Naive thymus-derived CD4-positive, alpha-beta T cell (primary cell): ENCODE measurements at regions of chr3 and their contacts with region 1.

Region 1: DNA sequence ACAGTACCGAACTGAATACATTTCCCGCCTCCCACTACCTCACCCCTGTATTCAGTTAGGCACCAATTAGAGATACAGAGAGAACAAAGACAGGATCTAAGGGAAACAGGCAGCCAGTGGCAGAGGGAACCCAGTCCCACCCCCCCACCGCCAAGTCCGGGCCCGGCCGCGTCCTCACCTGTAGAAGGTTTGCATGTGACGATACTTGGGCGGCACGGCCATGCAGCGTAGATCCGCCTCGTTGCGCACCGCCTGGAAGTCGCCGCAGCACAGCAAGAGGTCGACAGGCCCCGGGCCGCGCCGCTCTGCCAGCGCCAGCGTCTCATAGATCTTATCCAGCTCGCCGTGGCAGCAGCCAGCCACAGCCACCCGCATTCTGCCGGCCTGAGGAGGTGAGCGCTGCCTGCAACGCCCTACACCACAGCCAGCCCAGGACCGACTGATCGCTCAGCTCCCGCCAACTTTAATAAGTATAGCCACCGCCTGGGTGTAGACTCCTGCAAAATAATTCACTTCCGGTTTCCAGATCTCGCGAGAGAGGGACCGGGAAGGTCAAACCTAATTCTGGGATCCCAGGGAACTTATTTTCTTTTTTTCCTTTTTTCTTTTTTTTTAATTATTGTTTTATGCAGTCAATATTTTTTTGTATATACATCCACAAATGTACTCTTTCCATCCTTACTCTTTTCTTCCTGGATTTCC is at the start of gene DBR1:
- DNase-seq: peak; percentile 51 to 81 (median 74)
- ATAC-seq: peak; percentile 91
- H3K4me3 ChIP-seq: peak within 1 kb of the TSS; percentile 79
- H3K4me3 Mint-ChIP-seq: peak within 1 kb of the TSS; percentile 87 to 99 (median 98)
- H3K27ac ChIP-seq: peak within 1 kb of the TSS; percentile 80
- H3K27ac Mint-ChIP-seq: peak within 1 kb of the TSS; percentile 96 to 99 (median 97)
- H3K4me1 ChIP-seq: peaks cover 20 to 22% of the 10 kb centered on the region in 2 donors
- H3K4me1 Mint-ChIP-seq: peaks cover 22 to 56% (median 45%) of the 10 kb centered on the region in 7 donors
- H3K27me3 ChIP-seq: no peaks in the 10 kb centered on the region
- H3K27me3 Mint-ChIP-seq: peaks cover 0 to 9% (median 0%) of the 10 kb centered on the region in 5 donors
- total RNA-seq, gene DBR1: 15.4 to 28.2 (median 20.8) TPM

Region 2: DNA sequence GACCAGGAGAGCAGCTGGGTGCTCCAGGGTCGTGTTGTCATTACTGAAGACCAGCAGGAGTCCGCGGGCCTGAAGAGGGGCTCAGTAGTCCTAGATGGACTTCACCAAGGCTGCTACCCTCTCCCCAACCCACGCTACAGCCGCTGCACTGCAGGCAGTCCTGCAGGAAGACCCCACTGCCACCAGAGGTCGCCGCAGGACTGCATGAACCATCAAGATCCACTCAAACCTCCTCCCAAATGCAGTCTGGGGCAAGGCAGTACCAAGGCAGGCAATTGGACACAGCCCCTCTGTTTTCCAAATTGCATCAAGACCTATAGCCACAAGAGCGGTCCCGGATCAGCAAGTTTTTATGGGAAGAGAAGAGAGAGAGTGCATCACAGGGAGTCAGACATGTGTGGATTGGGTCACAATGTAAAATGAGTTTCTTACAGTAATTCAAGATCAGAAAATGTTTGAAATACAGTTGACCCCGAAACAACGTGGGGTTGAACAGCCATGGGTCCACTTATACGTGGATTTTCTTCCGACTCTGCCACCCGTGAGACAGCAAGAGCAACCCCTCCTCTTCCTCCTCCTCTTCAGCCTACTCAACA is 105.9 kb before region 1 on chr3:
- CTCF ChIA-PET with region 1: no interaction called
- POLR2A ChIA-PET with region 1: no interaction called
- intact Hi-C with region 1: loop called in 1 of 2 experiments (anchors 5 kb)
- DNase-seq: peak; percentile 36 to 78 (median 55)
- ATAC-seq: peak; percentile 85
- H3K4me3 ChIP-seq: no peak overlapping the region
- H3K4me3 Mint-ChIP-seq: no peak overlapping the region
- H3K27ac ChIP-seq: no peak overlapping the region
- H3K27ac Mint-ChIP-seq: no peak overlapping the region
- H3K4me1 ChIP-seq: no peaks in the 10 kb centered on the region
- H3K4me1 Mint-ChIP-seq: peaks cover 0 to 8% (median 0%) of the 10 kb centered on the region in 7 donors
- H3K27me3 ChIP-seq: no peaks in the 10 kb centered on the region
- H3K27me3 Mint-ChIP-seq: peaks cover 6 to 15% (median 12%) of the 10 kb centered on the region in 5 donors

Region 3: GRCh38 chr3:138263104-138263503 is 88.5 kb after region 1 on chr3:
- CTCF ChIA-PET with region 1: no interaction called
- POLR2A ChIA-PET with region 1: interaction called, 6 read pairs
- intact Hi-C with region 1: loop called in 1 of 2 experiments (anchors 5 kb)
- DNase-seq: no peak
- ATAC-seq: no peak
- H3K4me3 ChIP-seq: no peak overlapping the region
- H3K4me3 Mint-ChIP-seq: no peak overlapping the region
- H3K27ac ChIP-seq: no peak overlapping the region
- H3K27ac Mint-ChIP-seq: peak overlapping the region in 1 of 9 donors; percentile 43
- H3K4me1 ChIP-seq: no peaks in the 10 kb centered on the region
- H3K4me1 Mint-ChIP-seq: peaks cover 0 to 16% (median 0%) of the 10 kb centered on the region in 7 donors
- H3K27me3 ChIP-seq: no peaks in the 10 kb centered on the region
- H3K27me3 Mint-ChIP-seq: no peaks in the 10 kb centered on the region

Region 4: DNA sequence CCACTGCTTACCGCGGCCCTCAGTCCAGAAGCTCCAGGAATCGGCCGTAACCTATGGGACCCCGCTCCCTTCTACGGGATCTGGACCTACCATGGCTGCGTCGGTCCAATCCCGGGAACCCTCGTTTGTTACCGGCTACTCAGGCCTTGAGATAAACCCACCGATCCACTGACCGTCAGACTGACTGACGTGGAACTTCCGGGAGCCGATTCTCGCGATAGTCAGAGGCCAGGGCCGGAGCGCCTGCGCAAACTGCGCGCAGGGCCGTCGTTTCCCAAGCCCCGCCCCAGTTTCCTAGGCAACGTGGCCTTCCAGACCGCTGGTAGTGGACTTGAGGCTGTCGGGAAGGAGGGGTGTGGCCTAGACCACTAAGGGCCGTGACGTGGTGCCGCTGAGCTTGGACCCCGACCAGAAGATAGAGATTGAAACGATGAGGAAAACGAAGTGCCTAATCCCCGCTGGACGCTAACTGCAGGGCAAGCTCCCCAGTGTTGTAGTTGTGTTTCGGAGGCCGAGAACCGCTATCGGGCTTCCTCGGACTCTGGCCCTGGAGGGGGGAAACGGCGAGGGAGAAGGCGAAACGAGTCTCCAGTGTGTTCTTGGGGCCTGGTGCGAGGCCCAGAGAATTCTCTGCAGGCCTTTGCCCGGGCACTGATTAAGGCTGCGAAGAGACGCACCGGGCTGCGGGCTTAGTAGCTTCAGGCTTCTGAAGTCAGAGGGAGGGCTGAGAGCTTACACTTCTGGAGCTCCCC is 1215.1 kb after region 1 on chr3 and contains the start of gene COPB2:
- CTCF ChIA-PET with region 1: no interaction called
- POLR2A ChIA-PET with region 1: no interaction called
- intact Hi-C with region 1: loop called in 1 of 2 experiments (anchors 1 kb)
- DNase-seq: peak; percentile 84 to 97 (median 87)
- ATAC-seq: peak; percentile 97
- H3K4me3 ChIP-seq: peak within 1 kb of the TSS; percentile 91
- H3K4me3 Mint-ChIP-seq: peak within 1 kb of the TSS; percentile 87 to 100 (median 99)
- H3K27ac ChIP-seq: peak within 1 kb of the TSS; percentile 93
- H3K27ac Mint-ChIP-seq: peak within 1 kb of the TSS; percentile 97 to 100 (median 99)
- H3K4me1 ChIP-seq: peaks cover 5 to 13% of the 10 kb centered on the region in 2 donors
- H3K4me1 Mint-ChIP-seq: peaks cover 34 to 70% (median 60%) of the 10 kb centered on the region in 7 donors
- H3K27me3 ChIP-seq: no peaks in the 10 kb centered on the region
- H3K27me3 Mint-ChIP-seq: peaks cover 0 to 13% (median 0%) of the 10 kb centered on the region in 5 donors
- total RNA-seq, gene COPB2: 23.5 to 109 (median 64.5) TPM

Region 5: DNA sequence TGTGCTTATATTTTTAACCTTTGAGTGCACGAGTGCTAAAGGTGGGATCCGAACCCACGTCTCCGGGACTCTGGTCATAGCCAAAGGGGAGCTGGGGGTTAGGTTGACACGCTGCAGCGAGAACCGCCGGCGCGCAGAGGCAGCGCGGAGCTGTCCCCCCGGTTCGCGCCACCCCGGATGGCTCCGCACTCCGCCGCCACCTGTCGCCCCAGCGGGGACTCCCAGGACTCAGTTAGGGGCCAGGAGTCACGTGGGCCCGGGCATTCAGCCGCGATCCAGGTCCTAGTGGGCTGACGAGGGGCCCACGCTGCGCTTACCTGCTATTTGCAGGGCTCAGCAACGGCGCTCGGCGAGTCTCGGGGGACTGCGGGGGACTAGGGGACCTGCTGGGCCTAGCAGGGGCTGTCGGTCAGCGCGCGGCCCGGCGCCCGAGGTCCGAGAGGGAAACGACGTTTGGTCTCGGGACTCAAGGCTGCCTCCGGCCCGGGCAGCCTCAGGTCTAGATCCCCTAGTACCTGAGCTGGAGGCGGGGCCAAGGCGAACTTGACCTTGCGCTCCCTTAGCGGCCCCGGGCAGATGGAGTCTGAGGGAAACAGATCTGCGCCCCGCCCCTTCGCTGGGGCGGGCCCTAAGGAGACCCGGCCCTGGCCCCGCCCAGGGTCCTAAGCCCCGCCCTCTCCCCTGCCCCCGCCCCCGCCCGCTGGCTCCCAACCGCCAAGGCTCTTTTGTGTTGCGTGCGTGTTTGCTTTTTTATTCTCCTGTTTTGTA is 1503.0 kb after region 1 on chr3 and contains the start of gene NMNAT3:
- CTCF ChIA-PET with region 1: no interaction called
- POLR2A ChIA-PET with region 1: no interaction called
- intact Hi-C with region 1: loop called in 1 of 2 experiments (anchors 5 kb)
- DNase-seq: peak; percentile 65 to 84 (median 79)
- ATAC-seq: peak; percentile 99
- H3K4me3 ChIP-seq: peak within 1 kb of the TSS; percentile 73
- H3K4me3 Mint-ChIP-seq: peak within 1 kb of the TSS; percentile 76 to 88 (median 86)
- H3K27ac ChIP-seq: peak within 1 kb of the TSS; percentile 78
- H3K27ac Mint-ChIP-seq: peak within 1 kb of the TSS in 6 of 9 donors; percentile 31 to 80 (median 52)
- H3K4me1 ChIP-seq: peaks cover 0 to 7% of the 10 kb centered on the region in 2 donors
- H3K4me1 Mint-ChIP-seq: peaks cover 6 to 23% (median 14%) of the 10 kb centered on the region in 7 donors
- H3K27me3 ChIP-seq: no peaks in the 10 kb centered on the region
- H3K27me3 Mint-ChIP-seq: peaks cover 0 to 14% (median 0%) of the 10 kb centered on the region in 5 donors
- total RNA-seq, gene NMNAT3: 0.56 to 7.4 (median 4.5) TPM